CD8-positive, alpha-beta T cell (primary cell): ENCODE measurements at regions of chr17 and their contacts with region 1.

Region 1: GRCh38 chr17:56833809-56834379 is at the starts of genes C17orf67 and DGKE:
- DNase-seq: peak; percentile 96 to 99 (median 99)
- ATAC-seq: peak; percentile 88
- H3K4me3 ChIP-seq: peak within 1 kb of the TSS; percentile 78 to 97
- H3K4me3 Mint-ChIP-seq: peak within 1 kb of the TSS; percentile 96
- H3K27ac ChIP-seq: peak within 1 kb of the TSS; percentile 76 to 79
- H3K27ac Mint-ChIP-seq: peak within 1 kb of the TSS; percentile 93
- H3K4me1 ChIP-seq: peaks cover 55% of the 10 kb centered on the region
- H3K4me1 Mint-ChIP-seq: peaks cover 67% of the 10 kb centered on the region
- H3K27me3 ChIP-seq: no peaks in the 10 kb centered on the region
- H3K27me3 Mint-ChIP-seq: no peaks in the 10 kb centered on the region
- CTCF ChIP-seq: no peak
- total RNA-seq, gene C17orf67: 2.4 to 2.9 TPM
- total RNA-seq, gene DGKE: 24.4 to 25.4 TPM

Region 2: GRCh38 chr17:56629531-56630075 is 204.3 kb before region 1 on chr17:
- CTCF ChIA-PET with region 1: no interaction called
- POLR2A ChIA-PET with region 1: no interaction called
- intact Hi-C with region 1: no loop called
- DNase-seq: peak in 4 of 9 experiments; percentile 13 to 50 (median 20)
- ATAC-seq: peak; percentile 78
- H3K4me3 ChIP-seq: no peak overlapping the region
- H3K4me3 Mint-ChIP-seq: no peak overlapping the region
- H3K27ac ChIP-seq: no peak overlapping the region
- H3K27ac Mint-ChIP-seq: no peak overlapping the region
- H3K4me1 ChIP-seq: peaks cover 8% of the 10 kb centered on the region
- H3K4me1 Mint-ChIP-seq: peaks cover 6% of the 10 kb centered on the region
- H3K27me3 ChIP-seq: no peaks in the 10 kb centered on the region
- H3K27me3 Mint-ChIP-seq: no peaks in the 10 kb centered on the region
- CTCF ChIP-seq: no peak

Region 3: DNA sequence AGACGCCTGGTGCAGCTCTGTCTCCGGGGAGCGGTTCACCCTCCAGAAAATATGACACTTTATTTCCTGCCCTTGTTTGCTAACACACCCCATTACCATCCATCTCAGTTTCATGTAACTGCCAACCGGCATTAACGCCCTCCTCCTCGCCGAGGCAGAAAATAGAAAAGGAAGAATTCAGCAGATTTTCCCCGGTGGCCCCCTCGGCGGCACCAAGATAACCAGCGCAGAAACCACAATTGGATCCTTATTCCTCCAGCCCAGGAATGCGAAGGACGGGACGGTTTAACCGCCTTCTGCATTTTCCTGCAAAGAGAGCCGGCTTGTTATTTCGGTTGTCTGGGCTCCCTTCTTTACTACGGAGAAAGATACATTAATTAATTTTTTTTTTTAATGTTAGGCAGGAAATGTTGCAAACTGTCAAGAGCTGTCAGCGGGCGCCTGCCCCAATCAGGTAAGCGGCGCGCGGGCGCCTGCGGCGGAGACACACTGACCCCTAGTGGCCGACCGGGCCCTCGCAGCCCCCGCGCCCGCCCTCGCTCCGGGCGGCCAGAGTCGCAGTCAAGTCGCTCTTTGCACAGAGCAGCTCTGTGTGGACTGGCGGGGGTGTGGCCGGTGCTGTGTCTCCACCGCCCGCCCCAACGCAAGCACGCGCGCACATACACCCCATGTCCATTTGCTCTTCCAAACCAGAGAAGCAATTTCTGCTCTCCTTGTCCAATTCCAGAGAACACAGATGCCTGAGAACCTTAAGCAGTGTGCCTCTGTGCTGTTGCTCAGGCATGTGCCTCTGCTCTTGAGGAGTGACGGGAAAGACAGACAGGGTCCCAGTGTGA is 53.8 kb before region 1 on chr17:
- CTCF ChIA-PET with region 1: no interaction called
- POLR2A ChIA-PET with region 1: interaction called, 3 read pairs
- intact Hi-C with region 1: loop called in 1 of 2 experiments (anchors 5 kb)
- DNase-seq: peak; percentile 77 to 93 (median 84)
- ATAC-seq: peak; percentile 97
- H3K4me3 ChIP-seq: peak overlapping the region; percentile 44 to 61
- H3K4me3 Mint-ChIP-seq: peak overlapping the region; percentile 93
- H3K27ac ChIP-seq: peak overlapping the region; percentile 63 to 71
- H3K27ac Mint-ChIP-seq: peak overlapping the region; percentile 95
- H3K4me1 ChIP-seq: peaks cover 14% of the 10 kb centered on the region
- H3K4me1 Mint-ChIP-seq: peaks cover 18% of the 10 kb centered on the region
- H3K27me3 ChIP-seq: no peaks in the 10 kb centered on the region
- H3K27me3 Mint-ChIP-seq: no peaks in the 10 kb centered on the region
- CTCF ChIP-seq: peak; percentile 99

Region 4: GRCh38 chr17:56808503-56808902 is 25.4 kb before region 1 on chr17:
- CTCF ChIA-PET with region 1: no interaction called
- POLR2A ChIA-PET with region 1: no interaction called
- intact Hi-C with region 1: no loop called
- DNase-seq: no peak
- ATAC-seq: no peak
- H3K4me3 ChIP-seq: no peak overlapping the region
- H3K4me3 Mint-ChIP-seq: no peak overlapping the region
- H3K27ac ChIP-seq: no peak overlapping the region
- H3K27ac Mint-ChIP-seq: no peak overlapping the region
- H3K4me1 ChIP-seq: no peaks in the 10 kb centered on the region
- H3K4me1 Mint-ChIP-seq: no peaks in the 10 kb centered on the region
- H3K27me3 ChIP-seq: no peaks in the 10 kb centered on the region
- H3K27me3 Mint-ChIP-seq: no peaks in the 10 kb centered on the region
- CTCF ChIP-seq: no peak

Region 5: GRCh38 chr17:56960596-56961538 is 127.0 kb after region 1 on chr17 and contains the start of gene COIL:
- CTCF ChIA-PET with region 1: no interaction called
- POLR2A ChIA-PET with region 1: interaction called, 3 read pairs
- intact Hi-C with region 1: loop called (anchors 1 to 2 kb)
- DNase-seq: peak; percentile 85 to 96 (median 93)
- ATAC-seq: peak; percentile 98
- H3K4me3 ChIP-seq: peak within 1 kb of the TSS; percentile 65 to 89
- H3K4me3 Mint-ChIP-seq: peak within 1 kb of the TSS; percentile 89
- H3K27ac ChIP-seq: peak within 1 kb of the TSS; percentile 78 to 79
- H3K27ac Mint-ChIP-seq: peak within 1 kb of the TSS; percentile 96
- H3K4me1 ChIP-seq: peaks cover 22% of the 10 kb centered on the region
- H3K4me1 Mint-ChIP-seq: peaks cover 25% of the 10 kb centered on the region
- H3K27me3 ChIP-seq: no peaks in the 10 kb centered on the region
- H3K27me3 Mint-ChIP-seq: no peaks in the 10 kb centered on the region
- CTCF ChIP-seq: peak; percentile 99
- total RNA-seq, gene COIL: 24.1 to 24.3 TPM

Region 6: GRCh38 chr17:57255776-57256681 is 422.1 kb after region 1 on chr17 and contains the start of gene MSI2:
- CTCF ChIA-PET with region 1: no interaction called
- POLR2A ChIA-PET with region 1: no interaction called
- intact Hi-C with region 1: loop called (anchors 5 to 10 kb)
- DNase-seq: peak; percentile 87 to 97 (median 92)
- ATAC-seq: peak; percentile 76
- H3K4me3 ChIP-seq: peak within 1 kb of the TSS; percentile 73 to 81
- H3K4me3 Mint-ChIP-seq: peak within 1 kb of the TSS; percentile 92
- H3K27ac ChIP-seq: peak within 1 kb of the TSS; percentile 64 to 84
- H3K27ac Mint-ChIP-seq: peak within 1 kb of the TSS; percentile 93
- H3K4me1 ChIP-seq: peaks cover 37% of the 10 kb centered on the region
- H3K4me1 Mint-ChIP-seq: peaks cover 49% of the 10 kb centered on the region
- H3K27me3 ChIP-seq: no peaks in the 10 kb centered on the region
- H3K27me3 Mint-ChIP-seq: no peaks in the 10 kb centered on the region
- CTCF ChIP-seq: no peak
- total RNA-seq, gene MSI2: 130 to 135 TPM

Region 7: DNA sequence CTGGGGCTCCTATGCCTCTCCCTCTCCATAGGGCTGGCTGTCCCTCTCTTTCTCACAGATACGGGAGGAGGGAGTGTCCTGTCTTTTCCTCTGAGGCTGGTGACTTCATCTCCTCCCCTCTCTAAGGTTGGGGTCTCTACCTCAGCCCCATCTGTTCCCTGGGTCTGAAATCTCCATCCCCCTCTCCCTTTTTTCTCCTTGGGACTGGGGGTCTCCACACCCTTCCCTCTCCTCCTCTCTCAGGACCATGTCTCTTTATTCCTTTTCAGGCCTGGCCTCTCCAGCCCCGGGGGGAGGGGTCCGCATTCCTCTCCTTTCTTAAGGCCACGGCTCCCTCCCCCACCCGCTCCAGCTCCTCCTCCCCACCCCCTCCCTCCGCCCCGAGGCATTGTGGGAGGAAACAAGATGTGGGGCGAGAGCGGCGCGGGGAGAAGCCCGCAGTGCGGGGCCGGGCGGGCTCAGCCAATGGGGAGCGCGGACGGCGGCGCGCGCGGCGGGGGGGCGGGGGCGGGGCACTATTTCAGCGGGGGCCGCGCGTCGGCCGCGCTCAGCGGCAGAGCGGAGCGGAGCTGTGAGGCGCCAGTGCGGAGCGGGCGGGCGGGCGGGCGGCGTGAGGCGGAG is 1249.1 kb after region 1 on chr17 and contains the start of gene DYNLL2:
- CTCF ChIA-PET with region 1: no interaction called
- POLR2A ChIA-PET with region 1: no interaction called
- intact Hi-C with region 1: loop called (anchors 5 to 10 kb)
- DNase-seq: peak; percentile 76 to 93 (median 88)
- ATAC-seq: peak; percentile 69
- H3K4me3 ChIP-seq: peak within 1 kb of the TSS; percentile 60 to 62
- H3K4me3 Mint-ChIP-seq: peak within 1 kb of the TSS; percentile 89
- H3K27ac ChIP-seq: peak within 1 kb of the TSS; percentile 81 to 85
- H3K27ac Mint-ChIP-seq: peak within 1 kb of the TSS; percentile 88
- H3K4me1 ChIP-seq: peaks cover 33% of the 10 kb centered on the region
- H3K4me1 Mint-ChIP-seq: peaks cover 33% of the 10 kb centered on the region
- H3K27me3 ChIP-seq: no peaks in the 10 kb centered on the region
- H3K27me3 Mint-ChIP-seq: no peaks in the 10 kb centered on the region
- CTCF ChIP-seq: no peak
- total RNA-seq, gene DYNLL2: 30.5 to 30.6 TPM

Region 8: DNA sequence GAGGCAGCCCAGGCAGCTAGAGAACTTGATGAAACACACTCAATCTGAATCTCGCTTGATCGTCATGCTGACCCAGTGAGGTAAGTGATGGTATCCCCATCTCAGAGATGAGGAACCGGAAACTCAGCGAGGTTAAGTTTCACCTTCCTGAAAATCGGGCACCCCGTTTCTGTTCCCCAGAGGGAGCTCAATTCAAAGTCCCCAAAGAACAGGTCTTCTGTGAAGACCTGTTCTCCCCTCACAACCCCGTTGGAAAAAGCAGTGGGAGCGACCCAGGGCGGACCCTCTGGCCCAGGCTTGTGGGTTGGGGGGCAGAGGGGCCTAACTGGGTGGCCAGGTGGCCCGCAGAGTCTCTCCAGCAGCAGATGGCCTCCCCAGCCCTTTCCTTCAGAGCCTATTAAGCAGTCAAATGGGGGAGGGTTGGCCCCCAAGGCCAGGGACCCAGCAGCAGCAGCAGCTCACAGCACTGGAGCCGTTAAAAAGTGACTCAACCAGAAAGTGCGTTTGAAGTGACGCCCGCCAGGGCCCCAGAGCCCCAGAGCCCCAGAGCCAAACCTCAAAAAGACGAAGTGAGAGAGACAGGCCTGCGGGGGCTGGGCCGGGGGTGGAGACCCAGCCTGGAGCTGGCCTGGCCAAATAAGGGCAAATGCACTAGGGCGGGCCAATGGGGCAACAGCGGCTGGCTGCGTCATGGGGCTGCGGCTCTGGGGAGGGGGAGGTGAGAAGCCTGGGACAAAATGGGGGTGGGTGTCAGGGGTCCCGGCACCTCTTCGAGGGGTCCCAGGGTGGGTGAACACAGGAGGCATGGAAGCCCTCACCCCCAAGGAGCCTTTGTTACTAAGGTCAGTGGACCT is 1503.9 kb after region 1 on chr17:
- CTCF ChIA-PET with region 1: no interaction called
- POLR2A ChIA-PET with region 1: no interaction called
- intact Hi-C with region 1: loop called in 1 of 2 experiments (anchors 10 kb)
- DNase-seq: peak; percentile 81 to 96 (median 92)
- ATAC-seq: peak; percentile 72
- H3K4me3 ChIP-seq: peak overlapping the region; percentile 90 to 99
- H3K4me3 Mint-ChIP-seq: peak overlapping the region; percentile 92
- H3K27ac ChIP-seq: peak overlapping the region; percentile 92 to 99
- H3K27ac Mint-ChIP-seq: peak overlapping the region; percentile 97
- H3K4me1 ChIP-seq: peaks cover 72% of the 10 kb centered on the region
- H3K4me1 Mint-ChIP-seq: peaks cover 83% of the 10 kb centered on the region
- H3K27me3 ChIP-seq: no peaks in the 10 kb centered on the region
- H3K27me3 Mint-ChIP-seq: no peaks in the 10 kb centered on the region
- CTCF ChIP-seq: no peak